ENCODE measurements at regions of chr2 and their contacts with region 1.

Region 1: DNA sequence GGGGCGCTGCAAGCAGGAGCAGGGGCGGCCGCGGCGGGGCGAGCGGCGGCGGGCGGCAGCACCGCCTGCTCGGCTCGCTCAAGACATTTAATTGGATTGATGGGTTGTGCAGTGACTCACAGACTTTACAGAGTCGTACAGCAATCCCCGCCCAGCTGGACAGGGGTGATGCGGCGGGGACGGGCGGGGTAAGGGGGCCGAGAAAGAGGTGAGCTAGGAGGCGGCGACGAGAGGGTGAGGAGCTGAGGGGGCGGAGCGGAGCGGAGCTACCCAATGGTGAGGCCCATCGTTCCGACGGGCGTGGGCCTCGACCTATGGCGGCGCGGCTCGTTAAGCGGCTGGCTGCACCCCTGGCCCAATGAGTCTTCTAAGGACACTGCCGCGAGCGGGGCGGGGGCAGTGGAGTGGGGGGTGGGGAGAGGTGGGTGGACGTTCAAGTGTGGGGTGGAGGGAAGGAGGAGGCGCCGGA is 97.1 kb upstream of the SERTAD2 start:
- H3K4me3 ChIP-seq: peak overlapping the region; percentile 77
- H3K27ac ChIP-seq: peak overlapping the region; percentile 98
- H3K4me1 ChIP-seq: peaks cover 8% of the 10 kb centered on the region
- CTCF ChIP-seq: no peak

Region 2: GRCh38 chr2:64523666-64524603 is 226.9 kb before region 1 on chr2 and contains the start of gene AFTPH:
- CTCF ChIA-PET with region 1: no interaction called
- POLR2A ChIA-PET with region 1: interaction called, 11 read pairs
- H3K4me3 ChIP-seq: peak within 1 kb of the TSS; percentile 99
- H3K27ac ChIP-seq: peak within 1 kb of the TSS; percentile 80
- H3K4me1 ChIP-seq: no peaks in the 10 kb centered on the region; the same call in 1 of the 2 replicates
- CTCF ChIP-seq: peak; percentile 39

Region 3: GRCh38 chr2:64644177-64645004 is 106.5 kb before region 1 on chr2:
- CTCF ChIA-PET with region 1: interaction called, 8 read pairs
- POLR2A ChIA-PET with region 1: interaction called, 177 read pairs
- H3K4me3 ChIP-seq: peak overlapping the region; percentile 33
- H3K27ac ChIP-seq: peak overlapping the region; percentile 86
- H3K4me1 ChIP-seq: peaks cover 41% of the 10 kb centered on the region
- CTCF ChIP-seq: no peak

Region 4: DNA sequence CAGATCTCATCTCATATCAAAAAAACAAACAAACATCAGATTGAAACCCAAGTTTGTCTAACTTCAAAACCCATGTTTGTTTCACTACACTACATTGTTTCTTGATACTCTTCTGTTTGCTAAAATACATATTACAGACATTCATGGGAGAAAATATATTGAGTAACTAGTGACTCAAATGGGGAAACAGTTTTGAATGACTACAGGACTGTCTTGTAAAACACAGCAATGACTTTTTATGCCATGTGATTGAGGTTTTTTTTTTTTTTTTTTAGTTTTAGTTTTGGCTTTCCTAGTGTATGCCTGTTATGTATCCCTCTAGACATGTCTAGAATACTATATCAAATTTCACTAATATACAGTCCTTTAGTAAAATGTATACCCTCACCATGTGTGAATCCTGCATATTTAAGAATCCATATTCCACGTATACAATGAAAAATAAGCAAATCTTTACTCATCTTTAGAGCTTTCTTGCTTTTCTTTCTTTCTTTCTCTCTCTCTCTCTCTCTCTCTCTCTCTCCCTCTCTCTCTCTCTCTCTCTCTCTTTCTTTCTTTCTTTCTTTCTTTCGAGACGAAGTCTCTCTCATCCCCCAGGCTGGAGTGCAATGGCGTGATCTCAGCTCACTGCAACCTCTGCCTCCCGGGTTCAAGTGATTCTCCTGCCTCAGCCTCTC is 50.6 kb before region 1 on chr2:
- CTCF ChIA-PET with region 1: no interaction called
- POLR2A ChIA-PET with region 1: no interaction called
- H3K4me3 ChIP-seq: no peak overlapping the region
- H3K27ac ChIP-seq: no peak overlapping the region
- H3K4me1 ChIP-seq: peaks cover 34% of the 10 kb centered on the region
- CTCF ChIP-seq: no peak

Region 5: DNA sequence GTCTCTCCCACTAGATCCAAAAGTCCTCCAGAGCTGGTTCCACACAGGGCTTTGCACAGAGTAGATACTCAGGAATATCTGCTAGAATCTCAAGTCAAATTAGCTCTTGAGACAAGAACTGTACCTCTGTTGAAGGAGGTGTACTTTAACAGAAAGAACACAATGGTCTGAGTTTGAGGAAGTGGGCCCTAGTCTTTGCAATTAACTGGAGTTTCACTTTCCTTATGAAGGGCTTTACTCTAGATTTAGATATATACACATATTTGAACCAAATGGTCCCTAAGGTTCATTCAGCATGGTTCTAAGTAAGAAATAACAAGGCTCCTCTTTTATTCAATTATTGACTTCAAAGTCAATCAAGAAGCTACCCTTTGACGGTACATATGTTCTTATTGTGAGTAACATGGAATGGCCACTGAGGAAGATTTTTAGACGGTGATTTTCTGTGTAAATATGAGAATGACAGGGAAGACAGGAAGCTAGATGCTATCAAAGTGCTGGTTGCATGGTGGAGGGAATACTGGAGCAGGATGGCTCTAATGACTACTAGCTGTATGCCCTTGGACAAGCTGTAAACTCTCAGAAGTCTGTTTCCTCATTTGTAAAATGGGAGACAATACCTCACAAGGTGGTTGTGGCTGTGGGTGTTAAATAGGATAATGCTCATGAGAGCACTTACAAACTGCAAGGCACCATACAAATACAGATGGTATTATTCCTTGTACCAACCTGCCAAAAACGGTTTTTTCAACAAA is 23.7 kb before region 1 on chr2:
- CTCF ChIA-PET with region 1: interaction called, 3 read pairs
- POLR2A ChIA-PET with region 1: interaction called, 34 read pairs
- H3K4me3 ChIP-seq: no peak overlapping the region
- H3K27ac ChIP-seq: no peak overlapping the region
- H3K4me1 ChIP-seq: peaks cover 23% of the 10 kb centered on the region
- CTCF ChIP-seq: no peak

Region 6: GRCh38 chr2:64767670-64768468 is 17.0 kb after region 1 on chr2:
- CTCF ChIA-PET with region 1: interaction called, 14 read pairs
- POLR2A ChIA-PET with region 1: interaction called, 78 read pairs
- H3K4me3 ChIP-seq: peak overlapping the region; percentile 64
- H3K27ac ChIP-seq: peak overlapping the region; percentile 92
- H3K4me1 ChIP-seq: peaks cover 9% of the 10 kb centered on the region
- CTCF ChIP-seq: peak; percentile 59

Region 7: GRCh38 chr2:64792307-64792706 is 41.5 kb after region 1 on chr2:
- CTCF ChIA-PET with region 1: interaction called, 6 read pairs
- POLR2A ChIA-PET with region 1: interaction called, 18 read pairs
- H3K4me3 ChIP-seq: no peak overlapping the region
- H3K27ac ChIP-seq: no peak overlapping the region
- H3K4me1 ChIP-seq: peaks cover 9% of the 10 kb centered on the region
- CTCF ChIP-seq: no peak

Region 8: GRCh38 chr2:64859312-64860212 is 108.7 kb after region 1 on chr2:
- CTCF ChIA-PET with region 1: interaction called, 5 read pairs
- POLR2A ChIA-PET with region 1: interaction called, 13 read pairs
- H3K4me3 ChIP-seq: peak overlapping the region; percentile 3; the same call in 1 of the 2 replicates
- H3K27ac ChIP-seq: peak overlapping the region; percentile 60
- H3K4me1 ChIP-seq: peaks cover 4% of the 10 kb centered on the region; the same call in 1 of the 2 replicates
- CTCF ChIP-seq: peak; percentile 40; the same call in 1 of the 2 replicates

Region 9: DNA sequence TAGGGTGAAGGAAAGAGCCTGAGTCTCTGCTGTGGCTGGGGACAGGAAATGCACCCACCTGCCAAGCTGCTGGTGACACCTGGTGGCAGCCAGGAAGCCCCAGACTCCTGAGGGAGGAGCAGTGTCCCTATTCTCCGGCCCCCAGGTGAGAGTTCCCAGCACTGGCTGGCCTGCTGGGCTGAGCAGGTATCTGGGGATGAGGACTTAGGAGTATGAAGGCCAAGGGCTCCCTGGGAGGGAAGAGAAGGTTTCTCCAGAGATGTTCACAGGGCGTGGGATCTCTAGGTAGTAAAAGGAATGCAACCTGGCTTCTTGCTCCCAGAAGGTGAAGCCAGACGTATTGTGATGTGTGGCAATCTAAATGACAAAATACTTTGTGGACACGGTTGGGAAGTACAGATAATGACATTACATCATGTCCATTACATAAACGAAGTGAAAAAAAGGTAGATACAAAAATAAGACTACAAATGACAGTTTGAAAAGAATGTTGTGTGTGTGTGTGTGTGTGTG is 162.6 kb after region 1 on chr2:
- CTCF ChIA-PET with region 1: no interaction called
- POLR2A ChIA-PET with region 1: no interaction called
- H3K4me3 ChIP-seq: no peak overlapping the region
- H3K27ac ChIP-seq: no peak overlapping the region
- H3K4me1 ChIP-seq: no peaks in the 10 kb centered on the region; the same call in 1 of the 2 replicates
- CTCF ChIP-seq: peak; percentile 65

Region 10: GRCh38 chr2:64988420-64989125 is 237.7 kb after region 1 on chr2:
- CTCF ChIA-PET with region 1: no interaction called
- POLR2A ChIA-PET with region 1: no interaction called
- H3K4me3 ChIP-seq: peak overlapping the region; percentile 67
- H3K27ac ChIP-seq: peak overlapping the region; percentile 90
- H3K4me1 ChIP-seq: peaks cover 3% of the 10 kb centered on the region; the same call in 1 of the 2 replicates
- CTCF ChIP-seq: peak; percentile 93